PC-3 (cell line): ENCODE measurements at regions of chr3 and their contacts with region 1.

Region 1: GRCh38 chr3:57068437-57069089 is 8.1 kb downstream of the SPATA12 start:
- DNase-seq: peak; percentile 81
- ATAC-seq: peak; percentile 94
- H3K4me3 ChIP-seq: peak overlapping the region; percentile 41
- H3K27ac ChIP-seq: peak overlapping the region; percentile 74
- H3K4me1 ChIP-seq: peaks cover 25% of the 10 kb centered on the region
- H3K27me3 ChIP-seq: no peaks in the 10 kb centered on the region
- CTCF ChIP-seq: no peak

Region 2: DNA sequence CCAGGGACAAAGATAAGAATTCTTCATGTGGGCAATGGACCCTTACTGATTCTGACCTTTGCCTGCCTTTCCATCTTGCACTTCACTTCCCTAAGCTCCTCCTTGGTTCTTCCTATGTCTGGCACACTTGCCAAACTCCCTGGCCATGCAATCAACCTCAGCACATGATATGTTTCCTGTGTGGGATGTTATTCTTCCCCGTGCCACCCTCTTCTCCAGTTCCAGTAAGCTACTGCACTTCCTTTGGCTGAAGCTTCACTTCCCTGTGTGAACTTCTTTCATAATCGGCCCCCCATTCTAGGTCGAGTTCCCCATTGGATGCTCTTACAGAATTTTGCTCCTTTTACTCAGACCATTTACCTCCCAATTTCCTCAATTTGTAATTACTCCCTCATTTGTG is 374.8 kb before region 1 on chr3:
- CTCF ChIA-PET with region 1: no interaction called
- POLR2A ChIA-PET with region 1: no interaction called
- intact Hi-C with region 1: loop called (anchors 10 kb)
- DNase-seq: no peak
- ATAC-seq: no peak
- H3K4me3 ChIP-seq: no peak overlapping the region
- H3K27ac ChIP-seq: no peak overlapping the region
- H3K4me1 ChIP-seq: peaks cover 9% of the 10 kb centered on the region
- H3K27me3 ChIP-seq: no peaks in the 10 kb centered on the region
- CTCF ChIP-seq: no peak

Region 3: DNA sequence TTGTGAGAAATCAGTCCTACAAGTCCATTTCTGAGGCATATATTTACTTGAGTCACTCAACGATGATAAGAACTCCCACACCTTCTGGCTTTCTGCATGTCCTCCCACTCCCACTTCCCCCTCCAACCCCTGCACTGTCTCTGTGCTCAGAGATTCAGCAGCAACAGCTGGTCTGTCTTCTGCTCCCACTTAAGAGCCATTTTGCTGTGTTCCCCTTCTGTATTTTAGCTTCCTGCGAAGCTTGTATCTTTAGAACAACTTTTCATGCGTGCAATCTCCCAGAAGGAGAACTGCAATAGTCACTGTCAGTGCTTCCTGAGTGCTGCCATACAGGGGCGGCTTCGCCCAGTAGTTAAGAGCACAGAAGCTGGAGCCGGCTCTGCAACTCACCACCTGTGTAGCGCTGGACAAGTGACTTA is 98.1 kb before region 1 on chr3:
- CTCF ChIA-PET with region 1: no interaction called
- POLR2A ChIA-PET with region 1: no interaction called
- intact Hi-C with region 1: no loop called
- DNase-seq: no peak
- ATAC-seq: no peak
- H3K4me3 ChIP-seq: no peak overlapping the region
- H3K27ac ChIP-seq: no peak overlapping the region
- H3K4me1 ChIP-seq: no peaks in the 10 kb centered on the region
- H3K27me3 ChIP-seq: no peaks in the 10 kb centered on the region
- CTCF ChIP-seq: no peak